Pancreas (tissue), 10 donors: ENCODE measurements at regions of chr3 and their contacts with region 1.

Region 1: DNA sequence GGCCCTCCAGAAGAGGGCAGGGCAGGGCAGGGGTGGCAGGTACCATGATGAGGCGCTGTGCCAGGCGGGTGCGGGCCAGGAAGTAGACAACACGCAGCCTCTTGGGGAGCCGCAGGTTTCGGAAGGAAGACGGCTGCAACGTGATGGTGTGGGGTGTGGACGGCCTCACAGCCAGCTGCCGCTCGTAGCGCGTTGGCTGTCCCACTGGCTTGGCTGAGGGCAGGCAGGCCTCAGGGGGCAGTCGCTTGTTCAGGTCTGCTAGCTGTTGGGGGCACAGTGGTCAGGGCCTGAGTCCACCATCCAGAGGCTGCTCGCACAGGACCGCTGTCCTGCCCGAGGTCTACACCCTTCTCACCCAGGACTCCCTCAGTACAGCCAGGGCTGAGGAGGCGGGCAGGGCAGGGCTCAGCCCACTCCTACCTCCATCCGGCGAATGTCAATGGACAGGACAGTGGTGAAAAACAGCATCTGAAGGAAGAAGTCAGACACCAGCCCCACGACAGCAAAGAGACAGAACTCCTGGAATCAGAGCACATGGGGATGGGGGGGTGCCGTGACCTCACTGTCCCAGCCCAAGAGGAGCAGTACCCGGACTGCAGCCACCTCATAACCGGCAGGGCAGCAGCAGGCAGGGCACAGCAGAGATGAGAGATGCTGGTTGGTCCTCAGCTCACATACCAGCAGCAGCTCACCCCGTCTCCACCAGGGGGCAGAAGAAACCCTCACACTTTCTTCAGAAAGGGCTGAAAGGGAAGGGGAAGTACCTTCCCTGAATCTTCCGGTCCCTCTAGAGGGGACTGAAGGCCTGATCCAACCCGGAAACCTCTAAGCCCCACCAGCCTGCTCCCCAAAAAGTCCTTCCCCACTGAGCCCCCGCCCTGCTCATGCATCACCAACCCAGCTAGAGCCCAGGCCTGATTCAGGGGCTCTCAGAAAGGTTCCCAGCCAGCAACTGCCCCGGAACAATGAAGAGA is 40.0 kb downstream of the PTPN23 start:
- DNase-seq: peak; percentile 77 to 92 (median 90)
- ATAC-seq: peak; percentile 84 to 93 (median 88)
- H3K4me3 ChIP-seq: no peak overlapping the region
- H3K27ac ChIP-seq: peak overlapping the region in 3 of 4 donors; percentile 15 to 26 (median 17)
- H3K4me1 ChIP-seq: peaks cover 10 to 11% (median 10%) of the 10 kb centered on the region in 3 donors
- H3K27me3 ChIP-seq: no peaks in the 10 kb centered on the region
- CTCF ChIP-seq: peak; percentile 82 to 91 (median 89)

Region 2: DNA sequence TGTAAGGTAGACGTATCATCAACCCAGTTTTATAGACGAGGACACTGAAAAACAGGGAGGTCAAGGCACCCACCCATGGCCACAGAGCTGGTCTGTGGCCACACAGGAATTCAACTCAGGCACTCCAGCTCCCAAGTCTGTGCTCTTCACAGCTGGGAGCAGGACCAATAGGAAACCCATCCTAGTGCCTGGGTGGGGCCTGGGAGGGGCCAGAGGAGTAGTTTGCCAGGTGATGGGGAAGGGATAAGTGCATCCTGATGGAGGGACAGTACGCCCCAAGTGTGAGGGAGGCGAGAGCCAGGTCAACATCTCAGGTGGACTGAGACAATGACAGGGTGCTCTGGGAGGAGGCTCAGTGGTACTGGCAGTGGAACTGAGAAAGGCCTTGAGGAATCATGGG is 160.2 kb before region 1 on chr3:
- intact Hi-C with region 1: no loop called
- DNase-seq: no peak
- ATAC-seq: no peak
- H3K4me3 ChIP-seq: no peak overlapping the region
- H3K27ac ChIP-seq: no peak overlapping the region
- H3K4me1 ChIP-seq: no peaks in the 10 kb centered on the region
- H3K27me3 ChIP-seq: no peaks in the 10 kb centered on the region
- CTCF ChIP-seq: no peak

Region 3: DNA sequence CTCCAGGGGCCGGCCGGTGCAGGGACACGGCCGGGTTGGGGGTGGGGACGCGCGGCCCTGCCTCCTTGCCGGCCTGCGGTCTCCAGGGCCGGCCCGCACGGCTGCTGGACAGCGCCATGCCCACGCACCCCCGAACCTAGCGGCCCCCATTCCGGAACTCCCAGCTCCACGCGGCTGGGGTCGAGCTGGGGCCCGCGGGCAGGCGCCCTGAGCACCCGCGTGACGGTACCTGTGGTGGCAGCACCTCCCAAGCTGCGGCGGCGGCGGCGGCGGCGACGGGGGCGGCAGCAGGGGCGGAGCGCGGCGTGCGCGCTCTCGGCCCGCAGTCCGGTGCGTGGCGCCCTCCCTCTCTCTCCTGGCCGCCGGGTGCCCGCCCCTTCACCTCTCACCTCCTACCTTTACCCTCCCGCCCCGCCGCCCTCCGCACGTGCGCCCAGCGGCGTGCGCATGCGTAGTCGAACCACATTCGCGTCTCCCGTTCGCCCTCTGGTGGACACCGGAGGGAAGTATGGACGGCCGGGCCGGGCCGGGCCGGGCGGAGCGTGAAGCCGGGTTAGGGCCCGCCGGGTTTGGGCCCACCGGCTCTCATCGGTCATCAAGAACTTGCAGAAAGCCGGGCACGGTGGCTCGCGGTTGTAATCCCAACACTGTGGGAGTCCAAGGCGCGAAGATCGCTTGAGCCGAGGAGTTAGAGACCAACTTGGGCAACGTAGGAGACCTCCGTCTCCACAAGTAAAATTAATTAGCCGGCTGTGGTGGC is 55.0 kb after region 1 on chr3 and contains the start of gene SCAP:
- intact Hi-C with region 1: loop called in 2 of 3 experiments (anchors 5 kb)
- DNase-seq: peak; percentile 92 to 99 (median 96)
- ATAC-seq: peak; percentile 95 to 99 (median 98)
- H3K4me3 ChIP-seq: peak within 1 kb of the TSS; percentile 64 to 97 (median 82)
- H3K27ac ChIP-seq: peak within 1 kb of the TSS; percentile 66 to 77 (median 71)
- H3K4me1 ChIP-seq: peaks cover 0 to 20% (median 8%) of the 10 kb centered on the region in 3 donors
- H3K27me3 ChIP-seq: no peaks in the 10 kb centered on the region
- CTCF ChIP-seq: peak; percentile 91 to 97 (median 94)
- total RNA-seq, gene SCAP: 29.0 to 47.9 (median 36.3) TPM

Region 4: GRCh38 chr3:47664519-47664918 is 243.7 kb after region 1 on chr3:
- intact Hi-C with region 1: no loop called
- DNase-seq: no peak
- ATAC-seq: no peak
- H3K4me3 ChIP-seq: no peak overlapping the region
- H3K27ac ChIP-seq: no peak overlapping the region
- H3K4me1 ChIP-seq: peaks cover 0 to 7% (median 4%) of the 10 kb centered on the region in 3 donors
- H3K27me3 ChIP-seq: no peaks in the 10 kb centered on the region
- CTCF ChIP-seq: no peak

Region 5: DNA sequence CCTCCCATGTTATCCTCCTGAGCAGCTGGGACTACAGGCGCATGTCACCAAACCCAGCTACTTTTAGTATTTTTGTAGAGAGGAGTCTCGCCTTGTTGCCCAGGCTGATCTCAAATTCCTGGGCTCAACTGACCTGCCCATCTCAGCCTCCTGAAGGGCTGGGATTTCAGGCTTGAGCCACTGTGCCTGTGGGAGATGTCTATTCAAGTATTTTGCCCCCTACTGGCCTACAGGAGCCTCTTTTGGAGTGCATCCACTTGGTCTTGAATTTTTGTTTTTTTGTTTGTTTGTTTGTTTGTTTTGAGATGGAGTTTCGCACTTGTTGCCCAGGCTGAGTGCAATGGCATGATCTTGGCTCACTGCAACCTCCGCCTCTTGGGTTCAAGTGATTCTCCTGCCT is 378.9 kb after region 1 on chr3:
- intact Hi-C with region 1: loop called in 1 of 3 experiments (anchors 10 kb)
- DNase-seq: no peak
- ATAC-seq: no peak
- H3K4me3 ChIP-seq: no peak overlapping the region
- H3K27ac ChIP-seq: no peak overlapping the region
- H3K4me1 ChIP-seq: peaks cover 0 to 3% (median 0%) of the 10 kb centered on the region in 3 donors
- H3K27me3 ChIP-seq: no peaks in the 10 kb centered on the region
- CTCF ChIP-seq: no peak